Activated CD4-positive, alpha-beta T cell treated with anti-CD3 and anti-CD28 coated beads, Interleukin-2, amount 10 ng/mL, durations not matched to agents 24 days and 14 days (primary cell): ENCODE measurements at regions of chr11 and their contacts with region 1.

Region 1: GRCh38 chr11:43419460-43419859 is 60.7 kb downstream of the TTC17 start:
- DNase-seq: peak; percentile 82
- H3K4me3 Mint-ChIP-seq: no peak overlapping the region
- H3K27ac Mint-ChIP-seq: no peak overlapping the region
- H3K4me1 Mint-ChIP-seq: peaks cover 3% of the 10 kb centered on the region
- H3K27me3 Mint-ChIP-seq: no peaks in the 10 kb centered on the region

Region 2: GRCh38 chr11:43341159-43341558 is 78.3 kb before region 1 on chr11:
- intact Hi-C with region 1: loop called (anchors 5 kb)
- DNase-seq: no peak
- H3K4me3 Mint-ChIP-seq: no peak overlapping the region
- H3K27ac Mint-ChIP-seq: no peak overlapping the region
- H3K4me1 Mint-ChIP-seq: no peaks in the 10 kb centered on the region
- H3K27me3 Mint-ChIP-seq: no peaks in the 10 kb centered on the region

Region 3: DNA sequence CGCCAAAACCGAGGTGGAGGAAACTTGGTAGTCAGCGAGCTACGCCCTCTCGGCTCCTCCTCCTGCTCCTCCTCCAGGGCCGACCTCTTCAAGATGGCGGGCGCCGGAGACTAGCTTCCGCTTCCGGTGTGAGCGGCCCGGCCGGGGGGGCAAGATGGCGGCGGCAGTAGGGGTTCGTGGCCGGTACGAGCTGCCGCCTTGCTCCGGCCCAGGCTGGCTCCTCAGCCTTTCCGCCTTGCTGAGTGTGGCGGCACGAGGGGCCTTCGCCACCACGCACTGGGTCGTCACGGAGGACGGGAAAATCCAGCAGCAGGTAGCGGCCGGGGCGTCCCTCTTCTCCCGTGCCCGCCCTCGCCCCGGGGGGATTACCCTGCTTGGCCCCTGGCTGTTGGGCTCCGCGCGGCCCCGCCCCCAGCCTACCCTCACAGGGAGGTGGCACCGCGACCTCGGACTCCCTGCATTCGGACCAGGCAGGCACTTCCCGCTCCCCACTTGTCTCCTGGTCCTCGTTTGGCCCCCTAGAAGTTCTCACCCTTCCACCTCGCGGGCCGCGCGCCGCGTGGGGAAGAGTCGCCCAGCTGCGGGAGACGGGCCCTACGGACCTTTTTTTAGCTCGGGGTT is 60.5 kb before region 1 on chr11 and contains the start of gene TTC17:
- intact Hi-C with region 1: loop called (anchors 2 kb)
- DNase-seq: peak; percentile 98
- H3K4me3 Mint-ChIP-seq: peak within 1 kb of the TSS; percentile 99
- H3K27ac Mint-ChIP-seq: peak within 1 kb of the TSS; percentile 97
- H3K4me1 Mint-ChIP-seq: peaks cover 29% of the 10 kb centered on the region
- H3K27me3 Mint-ChIP-seq: no peaks in the 10 kb centered on the region
- total RNA-seq, gene TTC17: 64.9 and 75.1 TPM in 2 replicates

Region 4: GRCh38 chr11:43918662-43919061 is 499.2 kb after region 1 on chr11:
- intact Hi-C with region 1: no loop called
- DNase-seq: no peak
- H3K4me3 Mint-ChIP-seq: no peak overlapping the region
- H3K27ac Mint-ChIP-seq: no peak overlapping the region
- H3K4me1 Mint-ChIP-seq: peaks cover 12% of the 10 kb centered on the region
- H3K27me3 Mint-ChIP-seq: no peaks in the 10 kb centered on the region

Region 5: GRCh38 chr11:44065841-44066731 is 646.6 kb after region 1 on chr11 and contains the start of gene ACCS:
- intact Hi-C with region 1: no loop called
- DNase-seq: peak; percentile 97
- H3K4me3 Mint-ChIP-seq: peak within 1 kb of the TSS; percentile 92
- H3K27ac Mint-ChIP-seq: peak within 1 kb of the TSS; percentile 95
- H3K4me1 Mint-ChIP-seq: peaks cover 25% of the 10 kb centered on the region
- H3K27me3 Mint-ChIP-seq: peaks cover 2% of the 10 kb centered on the region
- total RNA-seq, gene ACCS: 19.7 and 21.7 TPM in 2 replicates